ENCODE measurements at regions of chr17 and their contacts with region 1.

Region 1: DNA sequence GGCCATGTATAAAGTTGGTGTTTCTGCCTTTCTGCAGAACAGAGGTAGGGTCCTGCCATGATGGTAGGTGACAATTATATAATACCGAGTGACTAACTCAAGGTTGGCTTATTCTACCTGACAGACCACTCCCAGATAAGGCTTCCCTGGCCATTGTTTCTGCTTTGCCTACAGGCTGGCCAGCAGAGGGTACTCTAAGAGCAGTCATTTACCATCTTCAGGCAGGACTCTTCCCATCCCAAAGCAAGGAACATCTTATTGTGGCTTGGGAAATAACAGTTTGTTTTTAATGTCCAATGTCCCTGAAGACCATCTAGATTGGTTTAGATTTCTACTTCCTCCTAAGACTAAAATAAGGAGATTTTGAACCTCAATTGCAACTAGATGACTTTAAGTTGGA is 74.1 kb downstream of the SNX11 start:
- H3K4me3 ChIP-seq: no peak overlapping the region
- H3K27ac ChIP-seq: no peak overlapping the region
- H3K4me1 ChIP-seq: no peaks in the 10 kb centered on the region
- CTCF ChIP-seq: peak; percentile 75

Region 2: GRCh38 chr17:48127356-48128051 is 54.1 kb before region 1 on chr17:
- CTCF ChIA-PET with region 1: no interaction called
- POLR2A ChIA-PET with region 1: no interaction called
- H3K4me3 ChIP-seq: no peak overlapping the region
- H3K27ac ChIP-seq: no peak overlapping the region
- H3K4me1 ChIP-seq: no peaks in the 10 kb centered on the region
- CTCF ChIP-seq: no peak

Region 3: GRCh38 chr17:48194097-48194550 is 12.5 kb after region 1 on chr17:
- CTCF ChIA-PET with region 1: interaction called, 22 read pairs
- POLR2A ChIA-PET with region 1: no interaction called
- H3K4me3 ChIP-seq: no peak overlapping the region
- H3K27ac ChIP-seq: no peak overlapping the region
- H3K4me1 ChIP-seq: peaks cover 17% of the 10 kb centered on the region
- CTCF ChIP-seq: no peak

Region 4: GRCh38 chr17:48250949-48251348 is 69.3 kb after region 1 on chr17:
- CTCF ChIA-PET with region 1: interaction called, 17 read pairs
- POLR2A ChIA-PET with region 1: no interaction called
- H3K4me3 ChIP-seq: no peak overlapping the region
- H3K27ac ChIP-seq: no peak overlapping the region
- H3K4me1 ChIP-seq: peaks cover 34% of the 10 kb centered on the region
- CTCF ChIP-seq: no peak

Region 5: DNA sequence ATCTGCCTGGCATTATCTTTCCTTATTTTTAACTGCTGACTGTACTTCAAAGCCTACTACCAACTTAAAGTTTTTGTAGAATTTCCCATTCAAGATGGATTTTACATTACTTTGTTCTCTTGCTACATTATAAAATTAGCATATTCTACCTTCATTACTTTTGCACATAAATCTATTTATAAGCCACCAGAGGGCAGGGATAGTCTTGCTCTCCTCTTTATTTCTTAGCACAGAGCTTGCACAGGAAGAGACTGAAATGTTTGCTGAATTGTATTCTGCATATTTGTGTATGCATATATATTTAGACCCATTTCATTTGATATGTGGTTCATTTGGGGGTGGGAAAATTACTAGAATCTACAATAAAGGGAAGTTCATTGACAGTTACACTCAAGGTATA is 140.4 kb after region 1 on chr17:
- CTCF ChIA-PET with region 1: no interaction called
- POLR2A ChIA-PET with region 1: no interaction called
- H3K4me3 ChIP-seq: no peak overlapping the region
- H3K27ac ChIP-seq: no peak overlapping the region
- H3K4me1 ChIP-seq: 0 out of 2 replicates have a peak, but pooled peaks cover 4% of the 10 kb centered on the region
- CTCF ChIP-seq: 0 out of 2 replicates have a peak, but pooled peaks have one; percentile 8